Activated CD4-positive, alpha-beta T cell treated with anti-CD3 and anti-CD28 coated beads, Interleukin-2, amount 10 ng/mL, durations not matched to agents 24 days and 14 days (primary cell): ENCODE measurements at regions of chr3 and their contacts with region 1.

Region 1: DNA sequence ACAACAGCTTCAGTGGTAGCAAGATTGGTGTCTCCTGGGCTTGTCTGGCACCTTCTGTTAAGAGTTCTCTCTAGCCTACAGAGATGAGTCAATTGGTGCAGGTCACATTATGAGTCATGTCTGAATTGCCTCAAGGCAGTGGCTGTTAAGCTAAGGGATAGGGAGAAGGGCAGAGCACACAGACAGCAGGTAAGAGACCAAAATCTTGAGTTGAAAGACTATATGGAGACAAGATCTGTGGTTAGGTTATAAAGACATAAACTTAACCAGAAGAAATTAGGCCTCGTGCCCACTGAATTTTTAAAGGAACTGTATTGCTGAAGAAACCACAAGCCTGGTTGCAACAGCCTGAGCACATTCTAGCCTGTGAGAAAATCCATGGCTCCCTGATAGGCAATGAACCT is 19.2 kb upstream of the KPNA1 start:
- DNase-seq: peak; percentile 81
- H3K4me3 Mint-ChIP-seq: peak overlapping the region; percentile 9
- H3K27ac Mint-ChIP-seq: peak overlapping the region; percentile 63
- H3K4me1 Mint-ChIP-seq: peaks cover 46% of the 10 kb centered on the region
- H3K27me3 Mint-ChIP-seq: no peaks in the 10 kb centered on the region

Region 2: GRCh38 chr3:122392868-122393844 is 140.8 kb before region 1 on chr3:
- intact Hi-C with region 1: loop called (anchors 2 kb)
- DNase-seq: peak; percentile 72
- H3K4me3 Mint-ChIP-seq: no peak overlapping the region
- H3K27ac Mint-ChIP-seq: no peak overlapping the region
- H3K4me1 Mint-ChIP-seq: peaks cover 49% of the 10 kb centered on the region
- H3K27me3 Mint-ChIP-seq: no peaks in the 10 kb centered on the region

Region 3: GRCh38 chr3:122458992-122459391 is 74.9 kb before region 1 on chr3:
- intact Hi-C with region 1: loop called (anchors 2 kb)
- DNase-seq: no peak
- H3K4me3 Mint-ChIP-seq: no peak overlapping the region
- H3K27ac Mint-ChIP-seq: no peak overlapping the region
- H3K4me1 Mint-ChIP-seq: peaks cover 2% of the 10 kb centered on the region
- H3K27me3 Mint-ChIP-seq: no peaks in the 10 kb centered on the region

Region 4: GRCh38 chr3:122497425-122497824 is 36.5 kb before region 1 on chr3:
- intact Hi-C with region 1: loop called (anchors 1 kb)
- DNase-seq: peak; percentile 67
- H3K4me3 Mint-ChIP-seq: no peak overlapping the region
- H3K27ac Mint-ChIP-seq: peak overlapping the region; percentile 15
- H3K4me1 Mint-ChIP-seq: peaks cover 29% of the 10 kb centered on the region
- H3K27me3 Mint-ChIP-seq: no peaks in the 10 kb centered on the region

Region 5: DNA sequence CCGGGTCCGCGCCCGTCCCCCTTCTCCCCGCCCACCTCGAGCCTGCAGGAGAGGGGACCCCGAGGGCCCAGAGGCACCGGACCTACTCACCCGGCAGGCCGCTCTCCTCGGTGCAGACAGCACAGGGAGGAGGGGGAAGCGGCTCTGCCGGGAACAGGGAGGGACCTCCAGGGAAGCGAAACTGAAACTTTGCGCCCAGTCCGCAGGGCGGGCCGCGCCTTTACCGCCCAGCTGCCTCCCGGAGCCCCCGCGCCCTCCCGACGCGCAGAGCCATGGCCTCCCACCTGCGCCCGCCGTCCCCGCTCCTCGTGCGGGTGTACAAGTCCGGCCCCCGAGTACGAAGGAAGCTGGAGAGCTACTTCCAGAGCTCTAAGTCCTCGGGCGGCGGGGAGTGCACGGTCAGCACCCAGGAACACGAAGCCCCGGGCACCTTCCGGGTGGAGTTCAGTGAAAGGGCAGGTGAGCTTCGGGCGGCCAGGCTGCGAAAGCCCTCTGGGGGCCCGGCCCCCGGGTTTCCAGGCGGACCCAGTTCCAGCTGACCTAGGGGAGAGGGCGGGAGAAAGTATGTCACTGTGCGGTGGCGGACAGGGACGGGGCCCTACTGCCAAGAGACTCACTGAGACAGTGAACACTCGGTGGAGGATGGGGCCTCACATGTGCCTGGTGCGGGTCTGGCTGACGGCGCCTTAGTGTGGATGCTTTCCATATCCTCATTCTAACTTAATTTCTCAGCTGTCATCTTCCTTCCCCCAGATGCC is 30.4 kb after region 1 on chr3 and contains the starts of genes DTX3L and PARP9:
- intact Hi-C with region 1: loop called (anchors 2 kb)
- DNase-seq: peak; percentile 97
- H3K4me3 Mint-ChIP-seq: peak within 1 kb of the TSS; percentile 95
- H3K27ac Mint-ChIP-seq: peak within 1 kb of the TSS; percentile 98
- H3K4me1 Mint-ChIP-seq: peaks cover 71% of the 10 kb centered on the region
- H3K27me3 Mint-ChIP-seq: no peaks in the 10 kb centered on the region
- total RNA-seq, gene DTX3L: 39.8 and 43.7 TPM in 2 replicates
- total RNA-seq, gene PARP9: 45.7 and 47.9 TPM in 2 replicates

Region 6: GRCh38 chr3:122609798-122610559 is 76.0 kb after region 1 on chr3:
- intact Hi-C with region 1: loop called (anchors 2 kb)
- DNase-seq: peak; percentile 81
- H3K4me3 Mint-ChIP-seq: peak overlapping the region; percentile 72
- H3K27ac Mint-ChIP-seq: peak overlapping the region; percentile 90
- H3K4me1 Mint-ChIP-seq: peaks cover 32% of the 10 kb centered on the region
- H3K27me3 Mint-ChIP-seq: no peaks in the 10 kb centered on the region